ENCODE measurements at regions of chr5 and their contacts with region 1.

Region 1: GRCh38 chr5:87405472-87406155 is 7.1 kb downstream of the CCNH start:
- DNase-seq: no peak

Region 2: DNA sequence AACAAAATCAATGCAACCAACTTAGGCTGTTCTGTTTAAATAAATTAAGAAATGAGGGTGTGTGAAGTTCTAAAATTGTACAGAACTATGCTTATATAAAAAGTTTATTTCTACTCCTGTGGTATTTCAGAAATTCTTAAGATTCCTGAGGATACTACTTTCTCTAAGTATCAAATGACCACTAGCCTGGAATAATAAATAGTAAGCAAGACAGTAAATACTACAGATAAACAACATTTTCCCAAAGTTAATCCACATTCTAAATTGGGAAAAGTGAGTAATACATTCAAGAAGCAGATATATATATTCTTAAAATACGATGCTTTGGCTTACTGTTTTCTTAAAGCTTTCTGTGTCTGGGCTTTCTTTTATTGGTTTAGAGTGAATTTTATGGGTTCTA is 22.4 kb before region 1 on chr5:
- intact Hi-C with region 1: loop called in 1 of 2 experiments (anchors 2 kb)
- DNase-seq: no peak

Region 3: GRCh38 chr5:87872986-87873385 is 467.4 kb after region 1 on chr5:
- intact Hi-C with region 1: no loop called
- DNase-seq: no peak